Activated naive CD4-positive, alpha-beta T cell treated with anti-CD3 and anti-CD28 coated beads for 36 hours (primary cell): ENCODE measurements at regions of chr9 and their contacts with region 1.

Region 1: DNA sequence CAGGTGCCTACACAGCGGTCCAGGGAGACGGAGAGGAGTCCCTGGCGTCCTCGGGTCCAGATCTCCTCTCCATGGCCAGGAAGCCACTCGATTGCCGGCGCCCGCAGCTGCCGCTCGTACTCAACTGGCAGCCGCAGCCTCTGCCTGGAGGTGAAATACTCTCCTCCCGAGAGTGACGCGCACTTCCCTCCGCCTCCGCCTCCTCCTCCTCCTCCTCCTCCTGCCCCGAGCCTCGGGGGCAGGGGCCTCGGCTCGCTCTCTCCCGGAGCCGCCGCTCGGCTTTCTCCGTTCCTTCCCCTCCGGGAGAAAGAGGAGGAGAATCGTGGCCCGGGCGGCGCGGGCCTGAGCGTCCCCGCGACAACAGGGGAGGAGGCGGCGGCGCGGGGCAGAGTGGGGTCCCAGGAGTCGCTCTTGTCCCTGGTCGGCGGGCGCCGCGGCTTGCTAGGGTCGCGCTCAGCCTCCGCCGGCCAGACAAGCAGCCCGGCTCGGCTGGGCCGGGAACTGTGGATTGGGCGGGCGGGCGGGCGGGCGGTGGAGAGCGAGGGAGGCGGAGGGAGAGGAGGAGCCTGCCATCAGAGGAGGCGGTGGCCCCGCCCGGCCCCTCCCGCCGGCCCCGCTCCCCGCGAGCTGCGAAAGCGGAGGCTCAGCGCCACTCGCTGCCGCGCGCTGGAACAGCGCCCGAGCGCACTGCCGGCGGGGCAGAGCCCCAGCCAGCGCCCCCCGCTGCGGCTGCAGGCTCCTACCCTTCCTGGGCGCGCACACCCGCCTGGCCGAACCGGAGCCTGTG is at the start of gene CEMIP2:
- DNase-seq: peak; percentile 88
- H3K4me3 Mint-ChIP-seq: peak within 1 kb of the TSS; percentile 86
- H3K27ac Mint-ChIP-seq: peak within 1 kb of the TSS; percentile 91
- H3K4me1 Mint-ChIP-seq: peaks cover 37% of the 10 kb centered on the region
- H3K27me3 Mint-ChIP-seq: no peaks in the 10 kb centered on the region
- total RNA-seq, gene CEMIP2: 36.4 to 39.7 TPM

Region 2: DNA sequence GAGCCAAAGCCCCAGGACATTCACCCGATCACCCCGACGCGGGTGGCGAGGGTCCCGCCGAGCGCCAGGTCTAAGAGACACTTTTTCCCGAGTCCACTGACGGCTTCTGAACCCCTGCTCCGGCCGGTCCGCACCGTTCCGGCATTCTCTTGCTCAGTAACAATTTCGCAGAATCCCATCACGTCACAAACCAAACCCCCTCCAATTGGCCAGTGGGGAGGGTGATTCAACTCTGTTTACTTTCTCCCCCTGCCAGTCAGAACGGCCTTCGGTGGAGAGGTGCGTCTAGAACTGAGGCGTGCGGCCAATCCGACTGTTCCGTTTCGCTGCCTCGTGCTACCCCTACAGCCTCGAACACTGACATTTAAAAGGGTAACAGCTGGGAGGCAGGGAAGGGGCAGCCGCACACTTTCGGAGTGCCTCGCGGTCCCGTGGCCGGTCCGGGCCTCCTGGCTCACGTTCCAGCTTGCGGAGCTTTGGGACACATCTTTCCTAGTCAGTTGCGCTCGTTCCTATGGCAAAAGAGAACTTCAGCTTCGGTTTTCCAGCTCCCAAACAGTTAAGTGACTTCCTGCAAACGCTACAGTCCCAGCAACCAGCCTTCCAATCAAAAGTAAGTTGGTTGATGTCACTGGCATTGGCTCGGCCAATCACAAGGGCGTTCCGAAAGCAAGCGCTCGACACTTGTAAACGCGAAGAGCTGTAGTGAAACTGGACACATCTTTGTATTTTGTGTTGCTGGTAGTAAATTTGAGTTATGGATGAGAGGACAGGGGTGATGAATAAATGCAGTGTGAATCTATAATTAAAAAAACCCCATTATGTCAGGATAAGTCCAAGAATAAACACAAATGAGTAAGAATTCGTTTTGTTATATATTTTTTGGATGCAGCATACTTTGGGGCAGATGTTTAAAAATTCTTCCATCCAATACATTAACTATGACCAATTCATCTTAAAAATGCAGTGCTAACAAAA is 1354.5 kb before region 1 on chr9 and contains the start of gene KLF9:
- CTCF ChIA-PET with region 1: no interaction called
- intact Hi-C with region 1: loop called (anchors 5 kb)
- DNase-seq: peak; percentile 96
- H3K4me3 Mint-ChIP-seq: peak within 1 kb of the TSS; percentile 100
- H3K27ac Mint-ChIP-seq: peak within 1 kb of the TSS; percentile 100
- H3K4me1 Mint-ChIP-seq: peaks cover 39% of the 10 kb centered on the region
- H3K27me3 Mint-ChIP-seq: no peaks in the 10 kb centered on the region
- total RNA-seq, gene KLF9: 44.2 to 45.0 TPM

Region 3: DNA sequence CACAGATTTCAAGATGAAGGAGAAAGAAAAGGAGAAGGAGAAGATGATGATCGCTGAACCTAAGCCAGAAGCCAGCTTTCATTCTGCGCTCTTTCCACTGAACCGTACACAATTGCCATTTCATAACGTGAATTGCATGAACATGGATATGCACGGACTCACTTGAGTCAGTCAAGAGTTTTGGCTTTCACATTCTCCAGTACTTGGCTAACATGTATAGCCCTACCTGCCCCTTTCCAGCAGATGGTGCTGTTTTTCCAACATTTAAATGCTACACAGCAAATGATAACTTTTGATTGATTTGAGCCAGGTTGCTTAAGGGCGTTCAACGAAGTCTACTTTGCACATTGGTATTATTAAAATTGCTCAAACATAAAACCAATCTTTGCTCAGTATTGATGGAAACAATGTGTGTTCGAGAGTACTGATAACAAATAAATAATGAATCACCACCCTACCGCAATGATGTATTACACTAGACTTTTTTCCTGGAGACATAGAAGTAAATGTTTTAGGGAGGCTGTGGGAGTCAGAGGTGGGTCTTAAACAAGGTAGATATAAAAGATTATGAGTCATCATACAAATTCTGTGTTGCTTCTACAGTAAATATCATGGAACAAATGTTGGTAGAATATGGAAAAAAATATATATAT is 843.6 kb before region 1 on chr9:
- CTCF ChIA-PET with region 1: no interaction called
- intact Hi-C with region 1: loop called (anchors 10 kb)
- DNase-seq: peak; percentile 27
- H3K4me3 Mint-ChIP-seq: no peak overlapping the region
- H3K27ac Mint-ChIP-seq: no peak overlapping the region
- H3K4me1 Mint-ChIP-seq: no peaks in the 10 kb centered on the region
- H3K27me3 Mint-ChIP-seq: no peaks in the 10 kb centered on the region

Region 4: GRCh38 chr9:71604197-71605063 is 164.2 kb before region 1 on chr9:
- CTCF ChIA-PET with region 1: interaction called, 45 read pairs
- intact Hi-C with region 1: loop called (anchors 1 kb)
- DNase-seq: peak; percentile 89
- H3K4me3 Mint-ChIP-seq: no peak overlapping the region
- H3K27ac Mint-ChIP-seq: no peak overlapping the region
- H3K4me1 Mint-ChIP-seq: no peaks in the 10 kb centered on the region
- H3K27me3 Mint-ChIP-seq: no peaks in the 10 kb centered on the region

Region 5: GRCh38 chr9:71709384-71709783 is 59.2 kb before region 1 on chr9:
- CTCF ChIA-PET with region 1: no interaction called
- intact Hi-C with region 1: no loop called
- DNase-seq: peak; percentile 11
- H3K4me3 Mint-ChIP-seq: no peak overlapping the region
- H3K27ac Mint-ChIP-seq: peak overlapping the region; percentile 11
- H3K4me1 Mint-ChIP-seq: peaks cover 25% of the 10 kb centered on the region
- H3K27me3 Mint-ChIP-seq: no peaks in the 10 kb centered on the region

Region 6: GRCh38 chr9:71729816-71730526 is 38.6 kb before region 1 on chr9:
- CTCF ChIA-PET with region 1: interaction called, 3 read pairs
- intact Hi-C with region 1: loop called (anchors 1 kb)
- DNase-seq: no peak
- H3K4me3 Mint-ChIP-seq: no peak overlapping the region
- H3K27ac Mint-ChIP-seq: no peak overlapping the region
- H3K4me1 Mint-ChIP-seq: peaks cover 9% of the 10 kb centered on the region
- H3K27me3 Mint-ChIP-seq: no peaks in the 10 kb centered on the region

Region 7: GRCh38 chr9:71819115-71819739 is 50.6 kb after region 1 on chr9:
- CTCF ChIA-PET with region 1: interaction called, 6 read pairs
- intact Hi-C with region 1: loop called (anchors 2 kb)
- DNase-seq: peak; percentile 68
- H3K4me3 Mint-ChIP-seq: no peak overlapping the region
- H3K27ac Mint-ChIP-seq: no peak overlapping the region
- H3K4me1 Mint-ChIP-seq: peaks cover 16% of the 10 kb centered on the region
- H3K27me3 Mint-ChIP-seq: no peaks in the 10 kb centered on the region

Region 8: DNA sequence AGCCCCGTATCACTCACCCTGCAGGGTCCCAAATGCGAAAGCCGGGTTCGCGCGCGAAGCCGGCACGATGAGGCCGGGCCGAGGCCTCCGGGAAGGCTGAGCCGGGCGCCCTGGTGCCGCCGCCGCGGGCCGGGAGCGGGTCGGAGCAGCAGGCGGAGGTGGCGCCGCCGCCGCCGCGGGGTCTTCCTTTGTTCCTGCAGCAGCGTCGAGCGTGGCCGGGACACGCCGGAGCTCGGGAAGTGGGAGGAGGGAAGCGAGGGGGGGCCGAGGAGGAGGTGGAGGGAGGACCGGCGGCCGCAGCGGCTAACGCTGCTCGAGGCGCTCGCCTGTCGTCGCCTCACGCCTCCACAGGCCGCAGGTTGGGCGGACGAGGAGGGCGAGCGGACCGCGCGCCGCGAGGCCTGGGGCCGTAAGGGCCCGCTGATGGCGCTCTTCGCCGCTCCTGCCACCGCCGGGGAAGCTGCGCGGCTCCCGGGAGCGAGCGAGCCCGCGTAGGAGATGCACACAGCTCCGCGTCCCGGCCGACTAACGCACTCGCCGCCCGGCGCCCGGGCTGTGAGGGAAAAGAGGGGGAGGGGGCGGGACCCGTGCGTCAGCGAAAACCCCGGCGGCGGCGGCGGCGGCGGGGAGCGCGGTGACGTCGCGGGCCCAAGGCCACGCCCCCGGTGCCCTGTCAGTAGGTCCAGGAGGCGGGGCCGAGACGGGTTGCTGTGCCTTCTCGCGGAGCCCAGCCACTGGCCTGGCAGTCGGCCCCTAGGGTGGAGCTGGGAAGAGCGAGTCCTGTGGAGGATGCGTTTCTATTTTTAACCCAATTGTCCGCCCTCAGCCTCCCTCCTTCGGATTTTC is 596.3 kb after region 1 on chr9 and contains the start of gene ZFAND5:
- CTCF ChIA-PET with region 1: no interaction called
- intact Hi-C with region 1: loop called (anchors 10 kb)
- DNase-seq: peak; percentile 94
- H3K4me3 Mint-ChIP-seq: peak within 1 kb of the TSS; percentile 82
- H3K27ac Mint-ChIP-seq: peak within 1 kb of the TSS; percentile 95
- H3K4me1 Mint-ChIP-seq: peaks cover 31% of the 10 kb centered on the region
- H3K27me3 Mint-ChIP-seq: no peaks in the 10 kb centered on the region
- total RNA-seq, gene ZFAND5: 71.9 to 73.2 TPM